ENCODE measurements at regions of chr14 and their contacts with region 1.

Region 1: DNA sequence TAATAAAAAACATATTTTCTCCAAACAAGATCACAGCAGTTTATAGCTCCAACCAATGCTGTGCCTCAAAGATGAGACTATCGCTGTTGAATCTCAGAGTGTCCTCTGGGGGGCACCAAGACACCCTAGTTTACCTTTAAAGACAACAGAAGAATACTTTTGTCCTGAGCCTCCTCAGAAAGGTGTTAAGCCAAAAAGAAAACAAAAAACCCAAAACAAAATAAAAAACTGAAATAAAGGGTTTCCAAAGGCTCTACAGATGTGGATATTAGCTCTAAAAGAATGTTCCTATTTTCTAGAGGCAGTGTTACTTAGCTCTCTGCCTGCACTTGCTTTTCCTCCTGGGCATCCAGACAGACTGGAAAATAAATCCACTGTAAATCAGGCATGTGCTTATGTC is 86.9 kb upstream of the TTC7B start:
- DNase-seq: peak; percentile 40
- ATAC-seq: peak; percentile 82
- H3K4me3 ChIP-seq: no peak overlapping the region
- H3K27ac ChIP-seq: no peak overlapping the region
- H3K4me1 ChIP-seq: no peaks in the 10 kb centered on the region
- H3K27me3 ChIP-seq: no peaks in the 10 kb centered on the region
- CTCF ChIP-seq: peak; percentile 73
- EP300 ChIP-seq: no peak
- POLR2A ChIP-seq: no peak
- RAD21 ChIP-seq: no peak

Region 2: DNA sequence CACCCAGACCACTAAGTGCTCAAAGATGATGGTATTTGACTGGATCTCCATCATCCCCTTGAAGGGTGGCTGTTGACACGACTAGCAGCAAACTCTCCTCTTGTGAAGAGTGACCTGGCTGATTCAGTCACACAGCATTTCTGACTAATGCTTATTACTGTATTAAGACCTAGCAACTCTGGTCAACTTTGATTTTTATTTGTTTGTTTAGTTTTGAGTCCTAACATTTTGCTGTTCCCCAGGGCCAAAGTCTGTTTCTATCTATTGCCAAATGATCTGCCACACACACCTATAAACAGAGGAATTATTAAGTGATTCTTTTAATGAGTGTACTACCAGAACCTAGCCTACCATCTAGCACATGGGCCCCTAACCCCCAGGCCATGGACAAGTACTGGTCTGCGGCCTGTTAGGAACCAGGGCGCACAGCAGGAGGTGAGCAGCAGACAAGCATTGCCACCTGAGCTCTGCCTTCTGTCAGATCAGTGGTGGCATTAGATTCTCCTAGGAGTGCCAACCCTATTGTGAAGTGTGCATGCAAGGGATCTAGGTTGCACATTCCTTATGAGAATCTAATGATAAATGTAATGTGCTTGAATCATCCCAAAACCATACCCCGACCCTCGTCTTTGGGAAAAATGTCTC is 37.3 kb after region 1 on chr14:
- CTCF ChIA-PET with region 1: no interaction called
- POLR2A ChIA-PET with region 1: no interaction called
- in situ Hi-C with region 1: no loop called
- intact Hi-C with region 1: no loop called
- DNase-seq: no peak
- ATAC-seq: no peak
- H3K4me3 ChIP-seq: no peak overlapping the region
- H3K27ac ChIP-seq: no peak overlapping the region
- H3K4me1 ChIP-seq: no peaks in the 10 kb centered on the region
- H3K27me3 ChIP-seq: no peaks in the 10 kb centered on the region
- CTCF ChIP-seq: no peak
- EP300 ChIP-seq: no peak
- POLR2A ChIP-seq: no peak
- RAD21 ChIP-seq: no peak

Region 3: DNA sequence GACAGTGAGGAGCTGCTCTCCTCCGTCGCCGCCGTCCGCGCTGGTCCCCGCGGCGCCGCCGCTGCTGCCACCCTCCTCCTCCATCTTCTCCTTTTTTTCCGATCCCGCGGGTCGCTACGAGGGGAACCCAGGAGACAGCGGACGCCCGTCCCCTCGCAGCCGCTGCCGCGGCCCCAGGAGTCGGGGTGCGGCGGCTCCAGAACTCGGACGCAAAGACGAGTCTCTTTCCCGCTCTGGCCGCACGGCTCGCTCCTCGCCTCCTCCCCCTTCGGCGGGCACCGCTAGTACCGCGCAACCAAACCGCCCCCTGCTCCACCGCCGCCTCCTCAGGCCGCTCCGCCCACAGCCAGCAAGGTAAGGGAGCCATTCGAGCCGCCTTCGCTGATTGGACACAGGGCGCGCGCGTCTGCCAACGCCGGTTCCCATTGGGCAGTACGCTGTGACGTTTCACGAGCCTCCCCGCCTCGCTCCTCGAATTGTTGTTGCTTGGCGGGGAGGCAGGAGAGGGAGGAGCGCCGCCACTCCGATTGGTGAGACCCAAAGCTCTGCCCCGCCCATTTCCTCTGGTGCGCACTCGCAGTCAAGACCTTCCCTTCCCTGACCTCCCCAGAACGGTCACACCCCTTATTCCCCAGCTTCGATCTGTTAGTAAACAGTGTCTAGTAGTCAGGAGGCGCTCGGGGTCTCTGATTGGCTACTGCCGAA is 157.4 kb after region 1 on chr14 and contains the start of gene RPS6KA5:
- CTCF ChIA-PET with region 1: no interaction called
- POLR2A ChIA-PET with region 1: no interaction called
- in situ Hi-C with region 1: no loop called
- intact Hi-C with region 1: loop called (anchors 10 kb)
- DNase-seq: peak; percentile 100
- ATAC-seq: peak; percentile 95
- H3K4me3 ChIP-seq: peak within 1 kb of the TSS; percentile 65 to 81 (median 80)
- H3K27ac ChIP-seq: peak within 1 kb of the TSS; percentile 93
- H3K4me1 ChIP-seq: peaks cover 44% of the 10 kb centered on the region
- H3K27me3 ChIP-seq: no peaks in the 10 kb centered on the region
- CTCF ChIP-seq: peak; percentile 16; the same call in 1 of the 2 replicates
- EP300 ChIP-seq: peak in 1 of 2 experiments; percentile 40; a peak in 1 of 4 replicates
- POLR2A ChIP-seq: peak in 1 of 2 experiments; percentile 61; a peak in 1 of 4 replicates
- RAD21 ChIP-seq: peak; percentile 71
- total RNA-seq, gene RPS6KA5: 0.58 and 0.65 TPM in 2 replicates

Region 4: GRCh38 chr14:91138511-91139359 is 235.6 kb after region 1 on chr14:
- CTCF ChIA-PET with region 1: interaction called, 7 read pairs
- POLR2A ChIA-PET with region 1: no interaction called
- in situ Hi-C with region 1: loop called (anchors 10 kb)
- intact Hi-C with region 1: loop called (anchors 1 kb)
- DNase-seq: peak; percentile 40
- ATAC-seq: peak; percentile 72
- H3K4me3 ChIP-seq: no peak overlapping the region
- H3K27ac ChIP-seq: no peak overlapping the region
- H3K4me1 ChIP-seq: peaks cover 22% of the 10 kb centered on the region
- H3K27me3 ChIP-seq: no peaks in the 10 kb centered on the region
- CTCF ChIP-seq: peak; percentile 55
- EP300 ChIP-seq: no peak
- POLR2A ChIP-seq: no peak
- RAD21 ChIP-seq: no peak

Region 5: DNA sequence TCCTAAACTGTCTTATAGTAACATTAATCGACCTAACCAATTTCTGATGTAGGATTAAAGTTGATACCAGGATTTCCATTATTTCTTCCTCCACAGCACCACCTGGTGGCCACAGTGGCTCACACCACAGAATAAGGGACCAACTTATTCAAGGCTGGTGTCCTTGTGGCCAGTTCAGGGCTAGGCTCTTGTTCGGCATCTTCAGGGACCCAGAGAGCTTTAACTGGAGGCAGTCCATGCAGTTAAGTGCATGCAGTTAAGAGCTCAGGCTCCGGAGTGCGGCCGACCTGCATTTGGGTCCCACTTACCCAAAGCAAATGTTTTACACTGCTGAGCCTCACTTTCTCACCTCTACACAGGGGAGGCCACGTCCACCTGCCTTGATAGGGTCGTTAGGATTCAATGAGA is 383.4 kb after region 1 on chr14:
- CTCF ChIA-PET with region 1: no interaction called
- POLR2A ChIA-PET with region 1: no interaction called
- in situ Hi-C with region 1: loop called (anchors 10 kb)
- intact Hi-C with region 1: no loop called
- DNase-seq: peak; percentile 58
- ATAC-seq: peak; percentile 97
- H3K4me3 ChIP-seq: no peak overlapping the region
- H3K27ac ChIP-seq: no peak overlapping the region
- H3K4me1 ChIP-seq: no peaks in the 10 kb centered on the region
- H3K27me3 ChIP-seq: no peaks in the 10 kb centered on the region
- CTCF ChIP-seq: peak; percentile 87
- EP300 ChIP-seq: no peak
- POLR2A ChIP-seq: no peak
- RAD21 ChIP-seq: peak; percentile 53; the same call in 1 of the 2 replicates

Measured in HepG2 (cell line).